CD4-positive, alpha-beta memory T cell (primary cell): ENCODE measurements at regions of chr20 and their contacts with region 1.

Region 1: GRCh38 chr20:2651772-2652723 is at the start of gene NOP56:
- DNase-seq: peak; percentile 89 to 99 (median 95)
- H3K4me3 ChIP-seq: peak within 1 kb of the TSS; percentile 85 to 88
- H3K4me3 Mint-ChIP-seq: peak within 1 kb of the TSS; percentile 90 to 92 (median 91)
- H3K27ac ChIP-seq: peak within 1 kb of the TSS; percentile 80
- H3K27ac Mint-ChIP-seq: peak within 1 kb of the TSS; percentile 89 to 94 (median 92)
- H3K4me1 ChIP-seq: peaks cover 31% of the 10 kb centered on the region
- H3K4me1 Mint-ChIP-seq: peaks cover 21 to 60% (median 29%) of the 10 kb centered on the region in 4 donors
- H3K27me3 ChIP-seq: no peaks in the 10 kb centered on the region
- H3K27me3 Mint-ChIP-seq: no peaks in the 10 kb centered on the region
- total RNA-seq, gene NOP56: 258 to 270 TPM

Region 2: GRCh38 chr20:2206957-2207769 is 444.9 kb before region 1 on chr20:
- CTCF ChIA-PET with region 1: no interaction called
- POLR2A ChIA-PET with region 1: no interaction called
- intact Hi-C with region 1: no loop called
- DNase-seq: peak; percentile 26 to 40 (median 37)
- H3K4me3 ChIP-seq: peak overlapping the region; percentile 11 to 51
- H3K4me3 Mint-ChIP-seq: peak overlapping the region; percentile 69 to 82 (median 74)
- H3K27ac ChIP-seq: no peak overlapping the region
- H3K27ac Mint-ChIP-seq: no peak overlapping the region
- H3K4me1 ChIP-seq: peaks cover 9% of the 10 kb centered on the region
- H3K4me1 Mint-ChIP-seq: peaks cover 0 to 4% (median 2%) of the 10 kb centered on the region in 4 donors
- H3K27me3 ChIP-seq: peaks cover 9% of the 10 kb centered on the region
- H3K27me3 Mint-ChIP-seq: peaks cover 21 to 29% of the 10 kb centered on the region in 2 donors

Region 3: DNA sequence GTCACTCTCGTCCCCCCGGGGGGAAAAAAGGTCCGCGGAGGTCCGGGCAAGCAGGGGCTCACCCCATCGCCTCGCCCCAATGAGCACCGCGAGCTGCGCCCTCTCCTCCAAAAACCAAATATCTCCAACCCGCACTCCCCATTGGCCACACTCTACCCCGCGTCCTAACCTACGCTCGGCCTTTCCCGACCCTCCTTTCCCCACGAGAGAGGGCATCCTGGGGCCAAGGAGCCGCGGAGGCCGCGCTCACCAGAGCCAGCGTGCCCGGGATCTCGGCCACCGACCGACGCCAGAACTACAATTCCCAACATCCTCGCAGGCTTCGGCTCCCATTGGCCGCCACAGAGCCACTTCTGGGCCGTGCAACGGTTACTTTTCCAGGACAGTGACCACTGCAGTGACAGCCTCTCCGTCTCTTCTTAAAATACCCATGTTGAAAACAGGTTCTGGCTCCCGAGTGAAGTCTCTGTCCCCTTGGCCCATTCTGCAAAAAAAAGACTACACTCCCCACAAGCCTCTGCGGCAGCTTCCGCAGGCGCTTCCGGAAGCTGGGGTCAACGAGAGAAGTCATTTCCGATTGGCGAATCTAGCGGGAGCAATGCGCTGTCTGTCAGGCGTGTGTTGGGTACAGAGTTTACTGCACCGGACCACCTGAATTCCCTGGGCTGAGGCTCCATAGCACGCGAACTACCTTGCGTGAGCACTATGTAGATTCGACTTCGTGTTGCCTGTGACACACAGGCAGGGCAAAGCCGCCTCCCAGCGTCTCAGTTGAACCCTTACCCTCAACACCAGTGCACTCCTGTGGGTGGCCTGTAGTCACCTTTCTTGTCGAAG is 143.2 kb before region 1 on chr20 and contains the start of gene ZNF343:
- CTCF ChIA-PET with region 1: no interaction called
- POLR2A ChIA-PET with region 1: interaction called, 5 read pairs
- intact Hi-C with region 1: loop called (anchors 5 kb)
- DNase-seq: peak; percentile 81 to 84 (median 83)
- H3K4me3 ChIP-seq: peak within 1 kb of the TSS; percentile 89 to 96
- H3K4me3 Mint-ChIP-seq: peak within 1 kb of the TSS; percentile 98 to 100 (median 100)
- H3K27ac ChIP-seq: peak within 1 kb of the TSS; percentile 62
- H3K27ac Mint-ChIP-seq: peak within 1 kb of the TSS; percentile 92 to 99 (median 96)
- H3K4me1 ChIP-seq: peaks cover 15% of the 10 kb centered on the region
- H3K4me1 Mint-ChIP-seq: peaks cover 10 to 22% (median 16%) of the 10 kb centered on the region in 4 donors
- H3K27me3 ChIP-seq: peaks cover 6% of the 10 kb centered on the region
- H3K27me3 Mint-ChIP-seq: peaks cover 8 to 14% of the 10 kb centered on the region in 2 donors
- total RNA-seq, gene ZNF343: 11.8 to 12.0 TPM

Region 4: DNA sequence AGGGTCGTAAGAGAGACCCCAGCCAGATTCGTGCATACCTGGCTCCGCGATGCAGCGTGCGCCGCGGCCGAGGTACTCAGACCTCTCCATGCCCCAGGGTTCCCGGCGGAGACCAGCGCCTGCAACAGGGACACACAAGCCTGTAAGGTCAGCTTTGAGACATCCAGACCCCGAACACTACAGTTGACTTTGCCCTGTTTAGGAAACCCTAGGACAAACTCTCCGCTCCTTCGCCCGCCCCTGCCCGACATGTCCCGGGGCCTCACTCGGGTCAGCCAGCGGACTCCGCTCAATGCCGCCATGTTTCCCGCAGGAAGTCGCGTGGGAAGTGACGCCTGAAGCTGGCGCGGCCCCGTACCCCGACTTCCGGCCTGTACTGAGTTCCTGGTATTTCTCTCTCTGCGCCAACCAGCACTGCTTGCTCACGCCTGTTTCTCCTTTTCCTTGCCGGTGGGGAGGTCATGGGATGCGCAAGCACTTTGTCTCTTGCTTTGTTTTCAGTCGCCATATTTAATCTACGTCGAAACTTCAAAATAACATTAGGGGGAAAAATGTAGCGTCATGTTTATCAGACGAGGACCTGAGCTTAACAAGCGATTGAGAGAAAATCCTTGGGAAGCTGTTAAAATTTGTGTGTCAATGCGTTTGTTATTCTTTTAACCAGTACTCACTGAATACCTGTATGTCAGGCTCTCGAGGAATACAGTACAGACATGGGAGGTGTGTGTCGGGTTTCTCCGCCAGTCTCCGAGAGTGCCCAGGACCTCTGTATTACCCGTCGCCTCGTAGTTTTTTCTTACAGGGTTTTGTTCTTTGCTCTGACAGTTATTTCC is 12.1 kb after region 1 on chr20 and contains the start of gene IDH3B:
- CTCF ChIA-PET with region 1: interaction called, 6 read pairs
- POLR2A ChIA-PET with region 1: interaction called, 180 read pairs
- intact Hi-C with region 1: loop called (anchors 1 kb)
- DNase-seq: peak; percentile 90 to 95 (median 91)
- H3K4me3 ChIP-seq: peak within 1 kb of the TSS; percentile 57 to 93
- H3K4me3 Mint-ChIP-seq: peak within 1 kb of the TSS; percentile 87 to 98 (median 94)
- H3K27ac ChIP-seq: peak within 1 kb of the TSS; percentile 83
- H3K27ac Mint-ChIP-seq: peak within 1 kb of the TSS; percentile 91 to 100 (median 98)
- H3K4me1 ChIP-seq: peaks cover 13% of the 10 kb centered on the region
- H3K4me1 Mint-ChIP-seq: peaks cover 17 to 32% (median 25%) of the 10 kb centered on the region in 4 donors
- H3K27me3 ChIP-seq: no peaks in the 10 kb centered on the region
- H3K27me3 Mint-ChIP-seq: no peaks in the 10 kb centered on the region
- total RNA-seq, gene IDH3B: 93.3 to 96.5 TPM